Activated CD4-positive, alpha-beta memory T cell treated with anti-CD3 and anti-CD28 coated beads, Interleukin-2, amount 10 ng/mL, durations not matched to agents 7 days and 5 days (primary cell): ENCODE measurements at regions of chr6 and their contacts with region 1.

Region 1: DNA sequence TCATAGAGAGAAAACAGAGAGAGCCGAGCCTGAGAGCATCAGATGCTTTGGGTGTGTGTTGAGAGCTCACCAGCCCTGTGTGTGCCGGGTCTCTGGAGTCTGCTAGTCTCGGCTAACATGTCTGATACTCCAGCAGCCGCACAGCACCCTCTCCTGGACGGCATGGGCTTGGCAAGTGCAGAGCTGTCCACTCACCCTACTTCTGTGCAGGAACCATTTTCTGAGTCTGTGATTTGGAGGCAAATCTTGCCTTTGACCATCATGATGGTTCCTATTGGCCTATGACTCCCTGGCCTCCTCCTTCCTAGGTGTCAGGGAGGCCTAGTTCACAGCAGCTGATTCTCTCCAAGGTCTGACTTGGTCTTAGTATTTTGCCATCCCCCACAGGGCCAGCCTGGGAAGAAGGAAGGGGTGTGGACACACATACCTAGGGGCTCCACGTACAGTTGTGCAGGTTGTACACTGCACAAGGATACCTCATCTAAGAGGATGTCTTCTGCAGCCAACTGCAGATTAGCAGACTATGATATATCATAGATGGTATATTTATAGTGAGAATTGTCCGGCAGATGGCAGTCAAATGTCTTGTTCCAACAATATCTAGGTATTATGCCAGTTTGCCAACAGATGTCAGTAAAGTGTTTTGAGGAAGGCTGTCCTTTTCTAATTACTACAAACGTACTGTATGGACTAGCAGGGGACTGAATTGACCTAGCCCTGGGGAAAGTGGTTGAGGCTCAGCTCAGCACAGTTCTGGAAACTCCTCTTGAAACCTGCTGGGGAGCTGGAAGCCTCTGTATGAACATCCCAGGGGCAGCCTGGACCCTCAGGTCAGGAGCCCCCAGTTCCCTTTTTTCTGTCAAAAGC is 13.0 kb downstream of the FGD2 start:
- DNase-seq: peak; percentile 95
- H3K4me3 Mint-ChIP-seq: peak overlapping the region; percentile 16
- H3K27ac Mint-ChIP-seq: peak overlapping the region; percentile 81
- H3K4me1 Mint-ChIP-seq: peaks cover 56% of the 10 kb centered on the region
- H3K27me3 Mint-ChIP-seq: no peaks in the 10 kb centered on the region

Region 2: GRCh38 chr6:36759148-36759759 is 259.2 kb before region 1 on chr6:
- CTCF ChIA-PET with region 1: interaction called, 10 read pairs
- POLR2A ChIA-PET with region 1: no interaction called
- DNase-seq: peak; percentile 86
- H3K4me3 Mint-ChIP-seq: no peak overlapping the region
- H3K27ac Mint-ChIP-seq: peak overlapping the region; percentile 55
- H3K4me1 Mint-ChIP-seq: peaks cover 47% of the 10 kb centered on the region
- H3K27me3 Mint-ChIP-seq: no peaks in the 10 kb centered on the region

Region 3: GRCh38 chr6:36874443-36875249 is 143.8 kb before region 1 on chr6 and contains the start of gene PPIL1:
- CTCF ChIA-PET with region 1: interaction called, 53 read pairs
- POLR2A ChIA-PET with region 1: interaction called, 16 read pairs
- DNase-seq: peak; percentile 83
- H3K4me3 Mint-ChIP-seq: peak within 1 kb of the TSS; percentile 92
- H3K27ac Mint-ChIP-seq: peak within 1 kb of the TSS; percentile 95
- H3K4me1 Mint-ChIP-seq: peaks cover 57% of the 10 kb centered on the region
- H3K27me3 Mint-ChIP-seq: no peaks in the 10 kb centered on the region
- total RNA-seq, gene PPIL1: 22.8 to 24.3 TPM

Region 4: GRCh38 chr6:36979347-36979742 is 39.1 kb before region 1 on chr6:
- CTCF ChIA-PET with region 1: interaction called, 20 read pairs
- POLR2A ChIA-PET with region 1: interaction called, 15 read pairs
- DNase-seq: peak; percentile 45
- H3K4me3 Mint-ChIP-seq: no peak overlapping the region
- H3K27ac Mint-ChIP-seq: peak overlapping the region; percentile 18
- H3K4me1 Mint-ChIP-seq: peaks cover 27% of the 10 kb centered on the region
- H3K27me3 Mint-ChIP-seq: no peaks in the 10 kb centered on the region

Region 5: GRCh38 chr6:37051138-37052026 is 33.0 kb after region 1 on chr6:
- CTCF ChIA-PET with region 1: interaction called, 399 read pairs
- POLR2A ChIA-PET with region 1: interaction called, 218 read pairs
- DNase-seq: peak; percentile 94
- H3K4me3 Mint-ChIP-seq: peak overlapping the region; percentile 88
- H3K27ac Mint-ChIP-seq: peak overlapping the region; percentile 99
- H3K4me1 Mint-ChIP-seq: peaks cover 71% of the 10 kb centered on the region
- H3K27me3 Mint-ChIP-seq: no peaks in the 10 kb centered on the region

Region 6: GRCh38 chr6:37190159-37190535 is 171.7 kb after region 1 on chr6:
- CTCF ChIA-PET with region 1: interaction called, 13 read pairs
- POLR2A ChIA-PET with region 1: interaction called, 6 read pairs
- DNase-seq: no peak
- H3K4me3 Mint-ChIP-seq: no peak overlapping the region
- H3K27ac Mint-ChIP-seq: peak overlapping the region; percentile 67
- H3K4me1 Mint-ChIP-seq: peaks cover 71% of the 10 kb centered on the region
- H3K27me3 Mint-ChIP-seq: no peaks in the 10 kb centered on the region

Region 7: GRCh38 chr6:37324131-37325033 is 306.0 kb after region 1 on chr6:
- CTCF ChIA-PET with region 1: interaction called, 14 read pairs
- POLR2A ChIA-PET with region 1: no interaction called
- DNase-seq: peak; percentile 22
- H3K4me3 Mint-ChIP-seq: no peak overlapping the region
- H3K27ac Mint-ChIP-seq: no peak overlapping the region
- H3K4me1 Mint-ChIP-seq: peaks cover 25% of the 10 kb centered on the region
- H3K27me3 Mint-ChIP-seq: no peaks in the 10 kb centered on the region